Activated CD4-positive, alpha-beta memory T cell treated with anti-CD3 and anti-CD28 coated beads for 36 hours (primary cell): ENCODE measurements at regions of chr1 and their contacts with region 1.

Region 1: DNA sequence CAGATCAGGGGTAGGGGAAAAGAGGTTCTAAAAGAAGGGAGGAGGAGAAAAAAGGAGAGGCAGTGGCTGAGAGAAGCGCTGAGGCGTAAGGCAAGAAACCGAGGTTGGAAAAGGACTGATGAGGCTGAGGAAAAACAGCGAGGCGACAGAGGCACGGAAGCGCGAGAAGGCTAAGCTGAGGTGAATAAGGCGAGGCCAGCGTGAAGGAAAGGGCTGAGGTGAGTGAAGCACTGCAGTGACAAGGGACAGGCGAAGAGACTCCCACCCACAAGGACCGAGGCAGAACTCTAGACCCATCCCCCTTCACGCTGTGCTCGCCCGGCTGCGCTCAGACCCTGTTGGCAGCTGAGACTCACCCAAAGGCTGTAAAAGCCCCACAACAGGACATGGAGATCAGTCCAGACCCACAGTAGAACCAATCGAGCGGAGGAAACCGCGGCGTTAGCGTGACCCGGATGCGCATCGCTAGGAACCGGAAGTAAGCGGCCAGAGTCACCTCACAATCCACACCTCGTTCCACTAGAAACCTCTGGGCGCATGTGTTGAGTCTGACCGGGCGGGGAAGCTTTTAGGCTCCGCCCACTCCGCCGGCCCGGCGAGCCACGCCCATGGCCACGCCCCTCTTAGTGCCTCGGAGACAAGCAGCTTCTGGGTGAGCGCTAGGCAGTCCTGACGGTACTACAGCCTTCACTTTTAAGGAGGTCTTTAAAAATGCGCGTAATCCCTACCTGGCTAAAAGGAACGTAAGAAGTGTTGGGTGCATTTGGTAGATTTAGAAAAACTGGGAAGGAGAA is at the start of gene EYA3:
- DNase-seq: peak; percentile 100
- H3K4me3 Mint-ChIP-seq: peak within 1 kb of the TSS; percentile 90
- H3K27ac Mint-ChIP-seq: peak within 1 kb of the TSS; percentile 86
- H3K4me1 Mint-ChIP-seq: peaks cover 34% of the 10 kb centered on the region
- H3K27me3 Mint-ChIP-seq: no peaks in the 10 kb centered on the region
- total RNA-seq, gene EYA3: 26.4 to 27.4 TPM

Region 2: GRCh38 chr1:27940297-27940696 is 148.1 kb before region 1 on chr1:
- CTCF ChIA-PET with region 1: interaction called, 7 read pairs
- POLR2A ChIA-PET with region 1: no interaction called
- intact Hi-C with region 1: loop called (anchors 1 kb)
- DNase-seq: peak; percentile 84
- H3K4me3 Mint-ChIP-seq: no peak overlapping the region
- H3K27ac Mint-ChIP-seq: peak overlapping the region; percentile 54
- H3K4me1 Mint-ChIP-seq: peaks cover 25% of the 10 kb centered on the region
- H3K27me3 Mint-ChIP-seq: peaks cover 7% of the 10 kb centered on the region

Region 3: DNA sequence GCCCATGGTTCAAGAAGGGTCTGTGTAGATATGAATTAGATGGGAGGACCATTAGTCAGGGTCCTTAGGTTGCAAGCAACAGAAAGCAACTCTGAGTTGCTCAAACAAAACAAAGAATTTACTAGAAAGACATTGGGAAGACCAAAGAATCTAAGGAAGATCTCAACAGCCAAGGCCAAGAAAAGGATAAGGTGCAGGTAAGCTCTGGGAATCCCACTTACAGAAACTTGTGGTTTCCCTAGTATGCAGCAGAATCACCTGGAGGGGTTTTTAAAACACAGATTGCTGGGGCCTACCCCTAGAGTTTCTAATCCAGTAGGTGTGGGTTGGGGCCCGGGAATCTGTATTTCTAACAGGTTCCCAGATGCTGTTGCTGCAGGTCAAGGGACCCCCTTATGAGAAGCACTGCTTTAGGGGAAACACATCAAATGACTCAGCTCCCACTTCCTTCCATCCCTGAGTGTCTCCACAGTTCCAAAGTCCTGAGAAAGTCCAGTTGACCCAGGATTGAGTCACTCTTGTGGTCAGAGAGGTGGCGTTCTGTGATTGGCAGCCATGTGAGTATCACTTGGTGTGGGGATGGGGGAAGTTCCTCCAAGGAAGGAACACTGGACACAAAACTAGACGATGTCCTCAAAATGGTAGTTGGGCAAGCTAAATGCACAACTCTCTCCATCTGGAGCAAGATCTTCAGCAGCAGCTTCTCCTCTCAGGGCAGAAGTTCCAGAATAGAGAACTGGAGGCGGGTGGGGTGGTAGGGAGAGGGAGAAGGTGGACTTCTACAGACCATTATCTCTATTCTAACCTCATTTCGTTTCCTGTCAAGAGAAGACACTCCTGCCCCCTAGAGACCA is 24.2 kb after region 1 on chr1:
- CTCF ChIA-PET with region 1: interaction called, 13 read pairs
- POLR2A ChIA-PET with region 1: no interaction called
- intact Hi-C with region 1: no loop called
- DNase-seq: no peak
- H3K4me3 Mint-ChIP-seq: no peak overlapping the region
- H3K27ac Mint-ChIP-seq: no peak overlapping the region
- H3K4me1 Mint-ChIP-seq: peaks cover 7% of the 10 kb centered on the region
- H3K27me3 Mint-ChIP-seq: peaks cover 5% of the 10 kb centered on the region

Region 4: GRCh38 chr1:28172713-28173150 is 84.4 kb after region 1 on chr1:
- CTCF ChIA-PET with region 1: interaction called, 13 read pairs
- POLR2A ChIA-PET with region 1: interaction called, 8 read pairs
- intact Hi-C with region 1: loop called (anchors 1 kb)
- DNase-seq: peak; percentile 58
- H3K4me3 Mint-ChIP-seq: no peak overlapping the region
- H3K27ac Mint-ChIP-seq: no peak overlapping the region
- H3K4me1 Mint-ChIP-seq: peaks cover 41% of the 10 kb centered on the region
- H3K27me3 Mint-ChIP-seq: peaks cover 29% of the 10 kb centered on the region

Region 5: GRCh38 chr1:28208818-28209441 is 120.6 kb after region 1 on chr1:
- CTCF ChIA-PET with region 1: interaction called, 224 read pairs
- POLR2A ChIA-PET with region 1: no interaction called
- intact Hi-C with region 1: loop called (anchors 1 kb)
- DNase-seq: peak; percentile 72
- H3K4me3 Mint-ChIP-seq: no peak overlapping the region
- H3K27ac Mint-ChIP-seq: no peak overlapping the region
- H3K4me1 Mint-ChIP-seq: peaks cover 2% of the 10 kb centered on the region
- H3K27me3 Mint-ChIP-seq: no peaks in the 10 kb centered on the region